ENCODE measurements at regions of chr11 and their contacts with region 1.

Region 1: GRCh38 chr11:76008474-76008873 is 193.5 kb downstream of the UVRAG start:
- DNase-seq: peak; percentile 86
- ATAC-seq: peak; percentile 76
- H3K4me3 ChIP-seq: peak overlapping the region; percentile 14; the same call in 1 of the 2 replicates
- H3K27ac ChIP-seq: peak overlapping the region; percentile 95
- H3K4me1 ChIP-seq: peaks cover 58% of the 10 kb centered on the region
- H3K27me3 ChIP-seq: no peaks in the 10 kb centered on the region
- CTCF ChIP-seq: no peak

Region 2: DNA sequence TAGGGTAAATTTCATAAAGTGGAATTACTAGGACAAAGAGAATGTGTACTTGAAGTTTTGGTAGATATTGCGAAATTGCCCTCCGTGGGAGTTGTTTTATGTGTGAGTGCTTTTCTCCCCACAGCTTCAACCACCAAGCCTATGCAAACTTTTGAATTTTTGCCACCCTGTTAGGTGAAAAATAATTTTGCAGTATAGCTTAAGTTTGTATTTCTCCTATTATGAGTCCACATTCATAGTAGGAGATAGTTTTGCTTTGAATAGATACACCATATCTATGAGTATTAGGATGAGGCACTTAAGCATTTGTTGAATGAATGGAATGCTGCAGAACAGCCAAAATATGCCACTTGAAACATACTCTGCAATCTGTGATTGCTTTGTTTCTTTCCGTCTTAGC is 149.9 kb before region 1 on chr11:
- CTCF ChIA-PET with region 1: no interaction called
- POLR2A ChIA-PET with region 1: no interaction called
- intact Hi-C with region 1: no loop called
- DNase-seq: peak; percentile 48
- ATAC-seq: no peak
- H3K4me3 ChIP-seq: no peak overlapping the region
- H3K27ac ChIP-seq: no peak overlapping the region
- H3K4me1 ChIP-seq: peaks cover 23% of the 10 kb centered on the region
- H3K27me3 ChIP-seq: no peaks in the 10 kb centered on the region
- CTCF ChIP-seq: no peak

Region 3: DNA sequence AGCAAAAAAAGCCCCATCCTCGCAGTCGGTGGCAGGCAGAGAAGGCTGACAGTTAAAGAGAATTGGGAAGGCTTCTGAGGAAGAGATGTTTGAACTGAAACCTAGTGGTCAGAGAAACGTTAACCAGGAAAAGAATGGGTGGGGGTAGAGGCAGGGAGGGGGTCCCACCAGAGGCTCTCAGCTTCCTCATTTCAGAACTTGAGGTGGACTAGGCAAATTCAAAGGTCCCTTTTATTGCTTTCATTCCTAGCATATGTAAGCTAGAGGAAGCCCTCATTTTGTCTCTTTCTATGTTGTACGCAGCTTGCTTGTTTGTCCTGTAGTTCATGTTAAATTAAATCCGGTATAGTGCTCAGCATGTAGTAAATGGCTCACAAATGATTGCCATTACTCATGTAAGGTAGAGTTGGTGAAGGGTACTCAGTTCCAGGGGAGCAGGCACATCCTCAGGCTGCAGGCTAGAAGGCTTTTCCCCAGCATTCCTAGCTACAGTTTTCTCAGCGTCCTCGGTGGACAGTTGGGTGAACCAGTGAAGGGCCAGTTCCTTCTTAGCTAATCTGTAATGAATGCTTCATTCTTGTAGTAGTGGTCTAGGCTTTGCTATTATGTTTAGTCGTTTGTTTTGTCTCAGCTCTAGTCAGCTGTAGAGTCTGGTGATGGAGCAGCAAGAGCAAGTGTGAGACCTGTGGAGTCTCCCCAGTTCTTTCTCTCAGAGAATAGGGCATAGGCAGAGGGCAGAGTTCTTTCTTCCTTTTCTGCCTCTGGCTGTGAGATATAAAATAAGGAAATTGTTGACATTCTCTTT is 134.9 kb before region 1 on chr11:
- CTCF ChIA-PET with region 1: no interaction called
- POLR2A ChIA-PET with region 1: no interaction called
- intact Hi-C with region 1: no loop called
- DNase-seq: no peak
- ATAC-seq: peak; percentile 48; the same call in 1 of the 2 replicates
- H3K4me3 ChIP-seq: no peak overlapping the region
- H3K27ac ChIP-seq: no peak overlapping the region
- H3K4me1 ChIP-seq: no peaks in the 10 kb centered on the region; the same call in 1 of the 2 replicates
- H3K27me3 ChIP-seq: no peaks in the 10 kb centered on the region
- CTCF ChIP-seq: no peak

Region 4: GRCh38 chr11:75969670-75970307 is 38.7 kb before region 1 on chr11:
- CTCF ChIA-PET with region 1: no interaction called
- POLR2A ChIA-PET with region 1: no interaction called
- intact Hi-C with region 1: loop called (anchors 2 kb)
- DNase-seq: peak; percentile 94
- ATAC-seq: peak; percentile 82
- H3K4me3 ChIP-seq: no peak overlapping the region; the same call in 1 of the 2 replicates
- H3K27ac ChIP-seq: peak overlapping the region; percentile 94
- H3K4me1 ChIP-seq: peaks cover 41% of the 10 kb centered on the region
- H3K27me3 ChIP-seq: no peaks in the 10 kb centered on the region
- CTCF ChIP-seq: no peak

Region 5: GRCh38 chr11:75996523-75997442 is 11.7 kb before region 1 on chr11:
- CTCF ChIA-PET with region 1: no interaction called
- POLR2A ChIA-PET with region 1: no interaction called
- intact Hi-C with region 1: no loop called
- DNase-seq: no peak
- ATAC-seq: no peak
- H3K4me3 ChIP-seq: no peak overlapping the region
- H3K27ac ChIP-seq: no peak overlapping the region
- H3K4me1 ChIP-seq: no peaks in the 10 kb centered on the region
- H3K27me3 ChIP-seq: no peaks in the 10 kb centered on the region
- CTCF ChIP-seq: no peak